Esophagus muscularis mucosa (tissue), 4 donors: ENCODE measurements at regions of chr12 and their contacts with region 1.

Region 1: DNA sequence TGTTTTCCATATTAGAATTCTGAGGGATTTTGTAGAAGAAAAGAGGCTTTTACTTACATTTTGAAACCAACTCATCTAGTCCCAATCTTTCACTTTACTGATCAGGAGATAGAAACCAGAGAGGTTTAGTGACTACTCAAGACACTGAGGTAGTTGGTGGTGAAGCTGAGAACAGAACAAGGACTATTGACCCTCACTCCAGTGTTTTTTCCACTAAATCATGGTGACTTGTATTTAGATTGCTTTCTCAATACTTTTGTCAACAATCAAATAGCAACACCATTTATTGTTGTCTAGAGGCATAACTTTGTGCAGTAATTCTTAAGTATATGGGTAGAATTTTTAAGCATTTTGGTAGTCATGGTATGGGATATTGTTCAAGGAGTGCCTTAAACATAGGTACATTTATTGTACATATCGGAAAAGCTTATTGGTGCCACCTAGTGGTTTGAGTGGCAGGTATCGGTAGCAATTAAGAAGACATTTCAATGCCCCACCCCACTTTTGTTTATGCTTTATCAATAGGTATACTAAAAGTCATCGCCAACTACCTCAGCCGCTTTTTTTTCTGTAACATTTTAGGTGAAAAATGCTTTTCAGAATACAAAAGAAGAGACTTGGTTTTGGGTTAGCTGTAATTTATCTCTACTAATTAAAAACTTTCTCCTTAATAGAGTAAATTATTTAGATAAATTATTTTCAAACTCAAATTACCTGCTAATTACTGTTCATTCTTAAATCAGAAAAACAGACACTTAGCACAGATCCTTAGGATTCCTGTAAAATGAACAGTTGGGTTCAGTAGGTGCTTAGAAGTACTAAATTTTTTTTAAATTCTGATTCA is 47.3 kb upstream of the PAWR start:
- DNase-seq: no peak
- H3K4me3 ChIP-seq: no peak overlapping the region
- H3K27ac ChIP-seq: no peak overlapping the region
- H3K4me1 ChIP-seq: no peaks in the 10 kb centered on the region
- H3K27me3 ChIP-seq: no peaks in the 10 kb centered on the region
- CTCF ChIP-seq: peak; percentile 56 to 68 (median 63)
- EP300 ChIP-seq: no peak
- POLR2A ChIP-seq: no peak

Region 2: GRCh38 chr12:79407671-79408622 is 330.1 kb before region 1 on chr12:
- intact Hi-C with region 1: loop called (anchors 5 kb)
- DNase-seq: no peak
- H3K4me3 ChIP-seq: no peak overlapping the region
- H3K27ac ChIP-seq: peak overlapping the region in 3 of 4 donors; percentile 45 to 72 (median 53)
- H3K4me1 ChIP-seq: peaks cover 3 to 25% (median 24%) of the 10 kb centered on the region in 4 donors
- H3K27me3 ChIP-seq: no peaks in the 10 kb centered on the region
- CTCF ChIP-seq: peak; percentile 60 to 66 (median 62)
- EP300 ChIP-seq: no peak
- POLR2A ChIP-seq: no peak

Region 3: GRCh38 chr12:79512053-79512452 is 226.0 kb before region 1 on chr12:
- intact Hi-C with region 1: no loop called
- DNase-seq: no peak
- H3K4me3 ChIP-seq: no peak overlapping the region
- H3K27ac ChIP-seq: no peak overlapping the region
- H3K4me1 ChIP-seq: no peaks in the 10 kb centered on the region
- H3K27me3 ChIP-seq: no peaks in the 10 kb centered on the region
- CTCF ChIP-seq: no peak
- EP300 ChIP-seq: no peak
- POLR2A ChIP-seq: no peak

Region 4: DNA sequence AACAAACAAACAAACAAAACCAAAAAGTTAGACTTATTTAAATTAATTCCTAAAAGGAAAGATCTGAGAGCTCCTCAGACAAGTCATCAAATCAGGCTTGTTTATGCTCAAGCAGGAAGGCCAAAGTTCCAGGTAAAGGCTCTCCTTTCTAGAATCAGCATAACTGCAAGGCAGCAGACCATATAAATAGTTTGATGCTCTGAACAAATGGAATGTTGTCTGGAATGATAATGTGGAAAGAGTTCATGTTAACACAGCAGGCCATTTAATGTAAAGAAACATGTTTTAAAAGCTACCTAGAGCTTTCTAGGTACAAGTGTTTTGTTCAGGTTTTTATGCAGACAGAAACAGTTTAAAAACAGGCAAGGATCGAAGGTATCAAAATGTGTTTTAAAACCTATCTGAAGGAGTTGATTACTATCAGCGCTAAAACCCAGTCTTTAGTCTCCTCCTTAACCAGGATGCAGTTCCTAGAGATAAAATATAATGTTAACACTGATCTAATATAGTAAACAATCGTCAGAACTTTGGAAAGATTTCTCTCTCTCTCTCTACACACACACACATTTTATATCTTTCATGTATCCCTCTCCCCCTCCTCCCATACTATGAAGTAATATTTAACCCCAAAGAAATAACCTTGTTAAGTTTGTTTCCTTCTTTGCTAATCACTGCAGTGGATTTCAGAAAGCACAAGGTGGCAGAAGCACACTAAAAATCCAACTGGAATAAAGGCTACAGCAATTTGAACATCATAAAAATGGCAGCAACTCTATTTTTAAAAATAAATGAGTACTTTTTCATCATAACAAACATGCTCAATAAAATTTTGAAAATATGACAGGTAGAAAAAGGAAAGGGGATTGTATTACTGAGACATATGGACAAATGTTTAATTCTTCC is 182.8 kb before region 1 on chr12:
- intact Hi-C with region 1: loop called (anchors 2 kb)
- DNase-seq: no peak
- H3K4me3 ChIP-seq: no peak overlapping the region
- H3K27ac ChIP-seq: no peak overlapping the region
- H3K4me1 ChIP-seq: peaks cover 8 to 52% (median 44%) of the 10 kb centered on the region in 4 donors
- H3K27me3 ChIP-seq: no peaks in the 10 kb centered on the region
- CTCF ChIP-seq: peak; percentile 47 to 59 (median 52)
- EP300 ChIP-seq: no peak
- POLR2A ChIP-seq: no peak

Region 5: DNA sequence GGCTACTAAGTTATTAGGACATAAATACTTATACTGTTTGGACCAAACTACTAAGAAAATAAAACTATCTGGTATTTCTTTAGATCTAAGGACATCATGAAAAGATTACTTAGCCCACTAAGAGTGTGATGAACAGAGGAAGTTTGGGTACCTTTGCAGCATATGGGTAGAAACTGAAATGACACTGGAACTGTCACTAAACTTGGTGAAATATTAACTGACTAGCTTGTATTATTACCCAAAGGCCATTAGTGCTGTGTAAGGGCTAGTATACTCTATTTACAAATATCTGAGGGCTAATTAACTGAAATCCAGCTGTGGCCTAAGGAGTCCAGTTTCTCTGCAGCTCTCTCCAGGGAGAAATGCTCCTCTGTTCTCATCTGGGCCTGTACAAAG is 92.9 kb before region 1 on chr12:
- intact Hi-C with region 1: no loop called
- DNase-seq: no peak
- H3K4me3 ChIP-seq: no peak overlapping the region
- H3K27ac ChIP-seq: no peak overlapping the region
- H3K4me1 ChIP-seq: peaks cover 0 to 24% (median 11%) of the 10 kb centered on the region in 4 donors
- H3K27me3 ChIP-seq: no peaks in the 10 kb centered on the region
- CTCF ChIP-seq: no peak
- EP300 ChIP-seq: no peak
- POLR2A ChIP-seq: no peak

Region 6: GRCh38 chr12:79956896-79957295 is 218.8 kb after region 1 on chr12:
- intact Hi-C with region 1: no loop called
- DNase-seq: no peak
- H3K4me3 ChIP-seq: no peak overlapping the region
- H3K27ac ChIP-seq: no peak overlapping the region
- H3K4me1 ChIP-seq: peaks cover 0 to 14% (median 8%) of the 10 kb centered on the region in 4 donors
- H3K27me3 ChIP-seq: no peaks in the 10 kb centered on the region
- CTCF ChIP-seq: no peak
- EP300 ChIP-seq: no peak
- POLR2A ChIP-seq: no peak